ENCODE measurements at regions of chr13 and their contacts with region 1.

Region 1: GRCh38 chr13:97798836-97799235 is 154.6 kb upstream of the IPO5 start:
- DNase-seq: no peak
- H3K4me3 ChIP-seq: no peak overlapping the region
- CTCF ChIP-seq: no peak

Region 2: GRCh38 chr13:97018029-97018831 is 780.6 kb before region 1 on chr13:
- CTCF ChIA-PET with region 1: interaction called, 49 read pairs
- POLR2A ChIA-PET with region 1: no interaction called
- DNase-seq: no peak
- H3K4me3 ChIP-seq: no peak overlapping the region
- CTCF ChIP-seq: peak; percentile 77

Region 3: DNA sequence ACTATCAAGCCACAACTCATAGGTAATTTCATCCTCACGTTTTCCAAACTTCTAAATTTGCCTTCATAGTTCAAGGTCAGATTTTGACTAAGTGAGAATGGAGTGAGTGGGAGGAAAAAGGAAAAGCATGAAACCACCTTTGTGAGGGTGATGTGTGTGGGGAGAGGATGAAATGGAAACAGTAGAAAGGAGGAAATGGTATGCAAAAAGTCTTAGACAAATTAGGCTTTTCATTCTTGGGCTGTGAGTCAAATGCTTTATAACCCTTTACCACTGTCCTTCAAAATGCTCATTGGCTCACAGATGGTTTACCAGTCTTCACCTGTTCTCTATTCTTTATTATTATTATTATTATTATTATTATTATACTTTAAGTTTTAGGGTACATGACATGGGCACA is 237.7 kb before region 1 on chr13:
- CTCF ChIA-PET with region 1: no interaction called
- POLR2A ChIA-PET with region 1: no interaction called
- DNase-seq: no peak
- H3K4me3 ChIP-seq: no peak overlapping the region
- CTCF ChIP-seq: no peak

Region 4: DNA sequence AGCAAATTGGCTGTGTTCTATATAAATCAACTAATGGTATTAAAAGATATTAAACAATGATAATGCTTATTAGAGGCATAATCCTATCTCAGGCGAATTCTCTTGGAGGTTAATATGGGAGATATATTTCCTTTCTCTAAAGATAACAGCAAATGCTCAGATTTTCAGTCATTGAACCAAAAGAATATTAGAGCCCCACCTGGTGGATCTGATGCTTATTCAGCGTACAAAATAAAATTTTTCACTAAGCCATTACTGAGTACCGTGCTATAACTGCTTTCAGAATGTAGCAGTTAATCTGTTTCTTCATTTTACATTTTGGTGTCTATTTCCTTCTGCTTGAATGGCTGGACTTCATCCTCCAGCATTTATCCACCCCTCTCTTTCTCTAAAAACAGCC is 11.3 kb after region 1 on chr13:
- CTCF ChIA-PET with region 1: interaction called, 12 read pairs
- POLR2A ChIA-PET with region 1: no interaction called
- DNase-seq: no peak
- H3K4me3 ChIP-seq: no peak overlapping the region
- CTCF ChIP-seq: no peak

Measured in AG04449 (cell line).